ENCODE measurements at regions of chr17 and their contacts with region 1.

Region 1: DNA sequence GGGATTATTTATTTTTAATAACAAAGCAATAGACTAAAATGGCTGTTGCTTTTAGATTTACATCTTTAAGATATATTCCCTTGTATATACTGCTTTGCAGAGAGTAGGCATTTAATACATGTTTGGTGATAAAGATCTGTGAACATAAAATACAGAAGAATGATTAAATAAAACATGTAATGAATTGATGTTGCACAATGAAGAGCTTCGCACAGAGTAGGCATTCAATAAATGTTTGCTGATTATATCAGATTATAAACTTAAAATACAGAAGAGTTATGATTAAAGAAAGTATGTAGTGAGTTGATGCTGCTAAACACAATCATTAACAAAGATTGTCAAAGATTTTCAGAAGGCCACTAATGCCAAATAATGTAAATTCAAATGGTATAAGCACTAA is 24.4 kb downstream of the HSF5 start:
- DNase-seq: no peak
- H3K4me3 ChIP-seq: no peak overlapping the region
- H3K27ac ChIP-seq: no peak overlapping the region
- H3K4me1 ChIP-seq: no peaks in the 10 kb centered on the region
- H3K27me3 ChIP-seq: peaks cover 22% of the 10 kb centered on the region
- CTCF ChIP-seq: no peak

Region 2: DNA sequence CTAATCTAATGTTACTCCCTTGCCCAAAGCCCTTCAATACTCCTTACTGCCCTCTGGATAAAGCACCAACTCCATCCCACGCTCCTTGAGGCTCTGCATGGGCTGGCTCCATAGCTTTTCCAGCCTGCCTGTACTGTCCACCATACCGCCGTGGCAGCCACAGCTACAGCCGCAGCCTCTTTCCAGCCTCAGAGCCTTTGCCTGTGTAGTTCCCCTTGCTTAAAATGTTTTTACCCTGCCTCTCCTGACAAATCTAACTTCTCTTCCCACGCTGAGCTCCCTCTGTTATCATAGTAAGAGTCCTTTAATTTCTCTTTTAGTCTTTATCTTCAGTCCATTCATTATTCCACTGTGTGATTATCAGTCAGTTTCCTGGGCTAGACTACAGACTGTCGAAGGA is 206.0 kb after region 1 on chr17:
- CTCF ChIA-PET with region 1: no interaction called
- POLR2A ChIA-PET with region 1: interaction called, 17 read pairs
- intact Hi-C with region 1: no loop called
- DNase-seq: no peak
- H3K4me3 ChIP-seq: no peak overlapping the region
- H3K27ac ChIP-seq: no peak overlapping the region
- H3K4me1 ChIP-seq: no peaks in the 10 kb centered on the region
- H3K27me3 ChIP-seq: no peaks in the 10 kb centered on the region
- CTCF ChIP-seq: no peak